Left ventricle myocardium superior (tissue), 1 donor: ENCODE measurements at regions of chr7 and their contacts with region 1.

Region 1: DNA sequence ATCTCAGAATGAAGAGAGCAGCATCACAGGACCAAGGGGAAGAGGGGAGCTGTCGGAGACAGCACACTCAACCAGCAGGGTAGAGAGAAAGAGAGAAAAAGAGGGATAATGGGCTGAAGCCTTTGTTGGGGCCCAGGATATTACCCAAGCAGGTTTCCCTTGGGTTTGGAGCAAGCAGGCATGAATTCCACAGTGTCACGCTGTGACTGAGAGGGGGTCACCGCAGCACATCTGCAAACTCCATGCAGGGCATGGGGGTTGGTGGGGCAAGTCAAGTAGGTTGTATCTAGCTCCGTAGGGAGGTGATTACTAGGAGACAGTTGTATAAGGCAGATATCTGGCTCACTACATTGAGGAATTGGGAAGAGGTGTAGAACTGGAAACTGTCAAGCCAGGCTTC is 42.2 kb upstream of the SEMA3E start:
- DNase-seq: no peak
- ATAC-seq: no peak

Region 2: DNA sequence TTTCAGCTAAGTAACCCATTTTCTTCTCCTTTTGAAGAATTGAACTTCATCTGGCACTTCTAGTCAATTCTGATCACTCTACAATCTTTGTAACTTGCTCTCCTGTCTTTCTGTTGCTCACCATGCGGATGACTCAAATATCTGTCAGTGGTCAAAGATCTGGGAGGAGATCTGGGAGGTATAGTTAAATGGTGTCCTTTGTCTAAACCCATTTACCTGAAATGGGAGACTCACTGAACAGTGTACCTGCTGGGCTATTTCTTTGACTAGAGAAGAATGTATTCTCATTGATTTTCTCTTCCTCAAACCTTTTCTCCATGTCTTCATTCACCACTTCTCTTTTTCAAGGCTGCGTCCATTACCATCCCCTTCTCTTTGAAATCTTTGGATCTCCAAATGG is 486.4 kb before region 1 on chr7:
- intact Hi-C with region 1: loop called (anchors 5 kb)
- DNase-seq: no peak
- ATAC-seq: no peak